ENCODE measurements at regions of chr14 and their contacts with region 1.

Region 1: DNA sequence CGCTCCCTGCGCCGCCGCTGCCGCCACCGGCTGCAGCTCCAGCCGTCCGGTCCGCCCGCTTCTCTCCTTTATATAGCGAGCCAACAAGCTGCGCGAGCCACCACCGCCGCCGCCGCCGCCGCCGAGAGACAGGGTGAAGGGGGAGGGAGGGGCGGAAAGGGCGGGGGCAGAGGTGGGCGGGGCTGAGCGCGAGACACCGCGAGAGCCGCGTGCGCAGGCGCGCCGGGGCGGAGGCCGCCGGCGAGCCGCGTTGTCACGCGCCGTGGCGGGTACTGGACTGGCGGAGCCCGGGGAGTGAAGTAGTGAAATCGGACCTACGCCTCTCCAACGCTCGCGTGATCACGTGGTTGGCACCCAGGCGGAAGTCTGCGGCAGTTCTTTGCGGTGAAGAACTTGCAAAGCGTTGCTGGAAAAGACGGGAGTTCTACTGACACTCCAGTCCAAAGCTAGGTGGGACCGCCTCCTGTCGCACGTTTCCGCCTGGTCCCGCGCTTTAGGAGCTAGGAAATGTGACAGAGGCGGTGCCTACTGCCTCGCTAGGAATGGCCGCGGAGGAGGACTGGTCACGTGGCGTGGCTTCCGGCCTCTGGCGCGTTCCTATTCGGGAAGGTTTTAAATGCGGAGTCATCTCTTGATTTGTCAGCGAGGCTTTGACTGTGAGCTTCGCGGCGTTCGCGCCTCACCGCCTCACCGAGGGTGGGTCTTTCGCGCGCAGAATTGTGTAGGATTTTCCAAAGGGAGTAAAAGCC is at the start of gene GTF2A1:
- DNase-seq: peak; percentile 96
- ATAC-seq: peak; percentile 79
- H3K4me3 Mint-ChIP-seq: peak within 1 kb of the TSS; percentile 99
- H3K27ac Mint-ChIP-seq: peak within 1 kb of the TSS; percentile 100
- H3K4me1 Mint-ChIP-seq: peaks cover 29% of the 10 kb centered on the region
- H3K27me3 Mint-ChIP-seq: no peaks in the 10 kb centered on the region
- total RNA-seq, gene GTF2A1: 40.3 to 57.8 TPM

Region 2: GRCh38 chr14:80930836-80931389 is 290.1 kb before region 1 on chr14:
- CTCF ChIA-PET with region 1: no interaction called
- POLR2A ChIA-PET with region 1: no interaction called
- intact Hi-C with region 1: loop called in 1 of 2 experiments (anchors 2 kb)
- DNase-seq: peak; percentile 73
- ATAC-seq: peak; percentile 99
- H3K4me3 Mint-ChIP-seq: peak overlapping the region; percentile 50
- H3K27ac Mint-ChIP-seq: peak overlapping the region; percentile 85
- H3K4me1 Mint-ChIP-seq: peaks cover 33% of the 10 kb centered on the region
- H3K27me3 Mint-ChIP-seq: no peaks in the 10 kb centered on the region

Region 3: GRCh38 chr14:80954687-80955299 is 266.2 kb before region 1 on chr14:
- CTCF ChIA-PET with region 1: no interaction called
- POLR2A ChIA-PET with region 1: no interaction called
- intact Hi-C with region 1: loop called in 1 of 2 experiments (anchors 5 kb)
- DNase-seq: peak; percentile 82
- ATAC-seq: peak; percentile 67
- H3K4me3 Mint-ChIP-seq: peak overlapping the region; percentile 75
- H3K27ac Mint-ChIP-seq: peak overlapping the region; percentile 72
- H3K4me1 Mint-ChIP-seq: peaks cover 41% of the 10 kb centered on the region
- H3K27me3 Mint-ChIP-seq: peaks cover 13% of the 10 kb centered on the region

Region 4: DNA sequence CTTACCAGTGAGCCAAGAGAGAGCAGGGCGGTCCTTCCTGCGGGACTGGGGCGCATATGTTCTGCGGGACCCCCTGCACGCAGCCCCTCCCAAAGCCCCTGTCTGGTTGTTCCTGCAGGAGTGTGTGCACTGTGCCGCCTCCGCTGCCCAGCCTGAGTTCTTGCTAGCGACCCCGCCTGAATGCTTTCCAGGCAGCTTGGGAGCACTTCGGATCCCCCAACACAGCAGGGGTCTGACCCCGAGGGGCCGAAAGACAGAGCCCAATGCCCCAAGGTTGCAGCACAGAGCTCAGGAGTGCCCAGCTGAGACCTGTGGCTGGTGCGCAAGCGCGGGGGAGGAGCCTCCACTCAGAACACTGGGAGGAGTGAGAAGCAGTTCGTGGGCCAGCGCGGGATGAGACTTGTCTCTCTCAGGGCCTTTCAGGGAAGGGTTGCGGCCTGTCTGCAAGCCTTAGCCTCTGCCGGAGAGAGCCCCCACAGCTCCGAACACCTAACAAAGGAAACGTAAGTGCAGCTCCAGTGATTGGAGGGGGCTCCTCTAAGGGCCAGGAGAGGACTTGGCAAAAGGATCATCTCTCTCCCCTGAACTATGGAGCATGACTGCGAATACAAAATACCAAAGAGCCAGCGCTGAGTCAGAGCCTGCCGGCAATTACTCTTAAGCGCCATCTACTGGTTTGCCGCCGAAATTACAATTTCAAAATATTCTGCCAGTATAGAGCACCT is 50.7 kb before region 1 on chr14:
- CTCF ChIA-PET with region 1: interaction called, 7 read pairs
- POLR2A ChIA-PET with region 1: interaction called, 6 read pairs
- intact Hi-C with region 1: loop called (anchors 1 to 2 kb)
- DNase-seq: peak; percentile 94
- ATAC-seq: peak; percentile 98
- H3K4me3 Mint-ChIP-seq: peak overlapping the region; percentile 83
- H3K27ac Mint-ChIP-seq: peak overlapping the region; percentile 92
- H3K4me1 Mint-ChIP-seq: peaks cover 20% of the 10 kb centered on the region
- H3K27me3 Mint-ChIP-seq: no peaks in the 10 kb centered on the region

Region 5: DNA sequence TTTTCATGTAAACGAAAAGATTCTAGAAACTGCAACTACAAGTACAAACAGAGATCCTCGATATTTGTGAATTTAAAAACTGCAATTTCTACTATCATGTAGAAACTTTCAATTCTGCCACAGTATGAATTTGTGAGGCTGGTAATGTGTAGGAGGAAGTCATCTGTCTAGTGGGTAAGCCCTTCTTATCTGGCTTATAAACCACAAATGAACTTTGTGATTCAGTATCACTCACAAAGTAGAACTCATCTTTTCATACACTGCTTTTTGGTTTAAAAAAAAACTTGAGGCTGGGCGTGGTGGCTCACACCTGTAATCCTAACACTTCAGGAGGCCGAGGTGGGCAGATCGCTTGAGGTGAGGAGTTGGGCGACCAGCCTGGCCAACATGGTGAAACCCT is 20.9 kb before region 1 on chr14:
- CTCF ChIA-PET with region 1: interaction called, 3 read pairs
- POLR2A ChIA-PET with region 1: no interaction called
- intact Hi-C with region 1: loop called in 1 of 2 experiments (anchors 2 kb)
- DNase-seq: peak; percentile 15
- ATAC-seq: peak; percentile 81
- H3K4me3 Mint-ChIP-seq: no peak overlapping the region
- H3K27ac Mint-ChIP-seq: peak overlapping the region; percentile 29
- H3K4me1 Mint-ChIP-seq: peaks cover 17% of the 10 kb centered on the region
- H3K27me3 Mint-ChIP-seq: no peaks in the 10 kb centered on the region

Region 6: DNA sequence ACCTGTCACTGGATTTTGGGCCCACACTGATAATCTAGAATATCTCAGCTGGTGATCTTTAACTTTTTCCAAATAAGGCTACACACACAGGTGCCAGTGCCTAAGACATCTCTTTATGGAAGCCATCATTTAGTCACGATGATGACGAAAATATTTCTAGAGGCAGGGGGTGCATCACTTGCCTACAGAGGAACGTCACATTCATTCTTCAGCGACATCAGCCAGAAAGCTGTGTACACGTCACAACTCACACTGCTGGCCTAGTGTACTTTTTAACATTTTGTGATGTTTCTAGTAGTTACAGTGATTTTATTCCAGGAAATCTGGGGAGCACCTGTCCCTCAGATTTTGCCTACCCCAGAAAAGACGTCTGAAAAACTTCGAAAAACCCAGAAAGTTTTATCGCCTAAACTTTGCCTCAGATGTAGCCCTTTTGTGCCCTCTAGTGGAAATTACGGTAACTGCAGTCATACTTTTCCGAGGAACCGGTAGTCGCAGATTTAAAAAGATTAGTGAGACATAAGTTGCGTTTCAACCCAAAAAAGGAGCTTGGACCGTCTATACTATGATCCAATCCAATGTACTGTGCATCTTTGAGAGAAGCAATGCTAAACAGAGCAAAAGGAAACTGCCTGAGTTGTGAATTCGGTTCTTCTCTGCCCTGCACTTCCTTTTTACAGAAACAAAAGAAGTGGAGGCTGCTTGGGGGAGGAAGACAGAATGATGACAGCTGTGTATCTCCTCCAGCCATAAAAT is 243.4 kb after region 1 on chr14:
- CTCF ChIA-PET with region 1: interaction called, 5 read pairs
- POLR2A ChIA-PET with region 1: no interaction called
- intact Hi-C with region 1: loop called in 1 of 2 experiments (anchors 1 kb)
- DNase-seq: peak; percentile 69
- ATAC-seq: peak; percentile 66
- H3K4me3 Mint-ChIP-seq: peak overlapping the region; percentile 70
- H3K27ac Mint-ChIP-seq: peak overlapping the region; percentile 85
- H3K4me1 Mint-ChIP-seq: peaks cover 7% of the 10 kb centered on the region
- H3K27me3 Mint-ChIP-seq: no peaks in the 10 kb centered on the region

Region 7: DNA sequence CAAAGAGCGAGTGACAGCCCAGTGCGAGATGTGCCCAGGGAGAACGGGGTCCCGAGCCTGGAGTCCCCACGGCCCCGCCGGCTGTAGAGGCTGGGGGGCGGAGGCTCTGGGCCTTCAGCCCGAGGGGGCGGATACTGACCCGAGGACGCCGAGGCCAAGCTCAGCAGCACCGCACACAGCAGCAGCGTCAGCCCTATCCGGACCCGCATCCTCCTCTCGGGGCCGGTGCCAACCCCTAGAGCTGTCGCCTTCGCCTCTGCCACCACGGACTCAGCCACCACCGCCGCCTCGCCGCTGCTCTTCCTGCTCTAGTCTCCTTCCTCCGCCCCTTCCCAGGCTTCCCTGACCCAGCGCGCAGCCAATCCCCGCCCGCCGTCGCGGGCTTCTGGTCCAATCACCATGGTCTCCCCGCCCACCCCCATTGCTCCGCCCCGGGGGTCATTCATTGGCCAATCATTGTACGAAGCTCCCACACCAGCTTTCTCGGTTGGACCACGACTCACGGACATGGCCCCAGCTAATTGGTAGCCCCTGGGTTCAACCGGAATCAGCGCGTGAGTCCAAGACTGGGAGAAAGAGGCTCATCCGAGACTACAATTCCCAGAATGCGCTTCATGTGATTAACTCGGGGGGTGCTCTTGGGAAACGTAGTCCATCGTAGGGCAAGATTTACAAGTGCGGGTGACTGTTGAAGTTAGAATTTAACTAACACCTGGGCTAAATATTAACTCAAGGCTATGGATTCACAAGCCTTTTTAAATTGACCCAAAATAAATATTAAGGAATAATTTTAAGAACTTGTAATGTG is 312.7 kb after region 1 on chr14 and contains the start of gene SEL1L:
- CTCF ChIA-PET with region 1: interaction called, 3 read pairs
- POLR2A ChIA-PET with region 1: interaction called, 4 read pairs
- intact Hi-C with region 1: loop called (anchors 1 kb)
- DNase-seq: peak; percentile 99
- ATAC-seq: peak; percentile 97
- H3K4me3 Mint-ChIP-seq: peak within 1 kb of the TSS; percentile 94
- H3K27ac Mint-ChIP-seq: peak within 1 kb of the TSS; percentile 82
- H3K4me1 Mint-ChIP-seq: peaks cover 54% of the 10 kb centered on the region
- H3K27me3 Mint-ChIP-seq: no peaks in the 10 kb centered on the region
- total RNA-seq, gene SEL1L: 39.0 to 57.4 TPM